Ascending aorta (tissue), 2 donors: ENCODE measurements at regions of chr1 and their contacts with region 1.

Region 1: DNA sequence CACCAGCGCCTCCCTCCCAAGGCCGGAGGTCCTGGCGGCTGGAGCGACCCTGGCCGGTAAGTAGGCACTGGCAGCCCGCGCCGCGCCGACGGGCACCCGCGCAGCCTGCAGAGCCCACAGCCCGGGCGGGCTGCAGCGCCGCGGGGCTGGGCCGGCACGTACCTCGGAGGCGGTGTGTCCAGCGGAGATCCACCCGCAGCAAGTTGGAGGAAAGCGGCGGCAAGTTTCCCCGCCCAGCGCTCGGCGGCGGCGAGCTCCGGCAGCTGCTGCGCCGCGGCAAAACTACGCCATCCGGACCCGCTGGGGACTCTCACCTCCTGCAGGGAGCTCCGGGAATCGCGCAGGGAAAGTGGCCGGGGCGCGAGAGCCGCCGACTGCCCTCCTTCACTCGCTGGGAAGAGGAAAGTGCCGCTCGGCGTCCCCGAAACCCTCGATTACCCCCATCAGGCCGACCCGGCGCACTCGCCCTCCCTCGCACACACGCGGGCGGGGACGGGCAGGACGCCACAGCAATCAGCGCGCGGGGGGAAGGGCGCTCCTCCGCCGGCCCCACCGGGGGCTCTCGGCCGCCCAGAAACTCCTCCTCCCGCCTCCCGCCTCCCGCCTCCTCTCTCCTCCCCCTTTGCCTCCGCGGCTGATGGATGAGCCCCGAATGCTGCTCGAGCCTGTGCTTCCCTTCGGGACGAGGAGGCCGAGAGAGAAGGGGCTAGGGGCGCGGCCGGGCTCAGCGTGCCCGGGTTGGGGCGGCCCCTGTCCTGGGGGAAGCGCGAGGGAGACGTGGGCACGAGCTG is at the start of gene TGFBR3:
- DNase-seq: peak; percentile 50 to 95
- H3K4me3 ChIP-seq: peak within 1 kb of the TSS; percentile 64 to 90
- H3K27ac ChIP-seq: peak within 1 kb of the TSS; percentile 83 to 95
- H3K4me1 ChIP-seq: peaks cover 0 to 10% of the 10 kb centered on the region in 2 donors
- H3K27me3 ChIP-seq: no peaks in the 10 kb centered on the region
- CTCF ChIP-seq: peak; percentile 52 to 60 (median 52)
- total RNA-seq, gene TGFBR3: 127 TPM

Region 2: GRCh38 chr1:91553200-91553621 is 332.7 kb before region 1 on chr1:
- intact Hi-C with region 1: loop called (anchors 5 kb)
- DNase-seq: peak in 1 of 2 donors; percentile 79
- H3K4me3 ChIP-seq: no peak overlapping the region
- H3K27ac ChIP-seq: peak overlapping the region; percentile 59 to 63
- H3K4me1 ChIP-seq: peaks cover 3 to 9% of the 10 kb centered on the region in 2 donors
- H3K27me3 ChIP-seq: no peaks in the 10 kb centered on the region
- CTCF ChIP-seq: no peak

Region 3: GRCh38 chr1:91650764-91651163 is 235.1 kb before region 1 on chr1:
- intact Hi-C with region 1: loop called (anchors 2 kb)
- DNase-seq: peak; percentile 67 to 89
- H3K4me3 ChIP-seq: no peak overlapping the region
- H3K27ac ChIP-seq: peak overlapping the region; percentile 50 to 81
- H3K4me1 ChIP-seq: peaks cover 0 to 11% of the 10 kb centered on the region in 2 donors
- H3K27me3 ChIP-seq: no peaks in the 10 kb centered on the region
- CTCF ChIP-seq: no peak

Region 4: DNA sequence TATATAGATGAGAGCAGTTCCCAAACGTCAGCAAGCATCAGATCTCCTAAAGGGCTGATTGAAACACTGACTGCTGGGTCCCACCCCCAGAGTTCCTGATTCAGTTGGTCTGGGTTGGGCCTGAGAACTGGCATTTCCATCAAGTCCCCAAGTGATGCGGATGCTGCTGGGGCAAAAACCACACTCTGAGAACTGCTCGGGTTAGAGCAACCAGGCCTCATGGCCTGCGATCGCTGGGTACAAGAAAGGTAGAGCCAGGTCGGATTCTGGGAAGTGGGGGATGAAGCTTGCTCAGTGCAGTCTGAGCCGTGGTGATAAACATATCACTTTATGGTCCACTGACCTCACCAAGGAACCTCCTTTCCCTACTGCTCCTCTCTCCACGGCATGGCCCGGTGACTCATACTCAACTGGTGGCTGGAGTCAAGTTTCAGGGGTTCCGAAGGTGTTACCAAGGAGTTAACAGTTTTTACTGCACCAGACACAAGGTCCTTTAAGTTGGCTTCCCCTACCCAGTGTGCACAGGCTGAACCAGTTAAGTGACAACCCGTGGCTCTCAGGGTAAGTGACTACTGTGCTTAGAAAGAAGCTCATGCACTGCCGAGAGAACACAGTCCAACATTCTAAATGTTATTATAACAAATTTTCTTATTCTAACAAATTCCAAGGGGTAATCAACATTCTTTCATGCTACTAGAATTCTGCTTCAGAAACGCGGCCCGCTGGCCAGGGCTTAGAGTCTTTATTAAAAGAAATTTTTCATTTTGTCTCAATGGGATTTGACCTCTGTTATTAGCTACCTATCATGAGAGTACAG is 153.4 kb before region 1 on chr1:
- intact Hi-C with region 1: loop called (anchors 5 kb)
- DNase-seq: no peak
- H3K4me3 ChIP-seq: no peak overlapping the region
- H3K27ac ChIP-seq: peak overlapping the region in 1 of 2 donors; percentile 17
- H3K4me1 ChIP-seq: peaks cover 0 to 28% of the 10 kb centered on the region in 2 donors
- H3K27me3 ChIP-seq: no peaks in the 10 kb centered on the region
- CTCF ChIP-seq: no peak

Region 5: DNA sequence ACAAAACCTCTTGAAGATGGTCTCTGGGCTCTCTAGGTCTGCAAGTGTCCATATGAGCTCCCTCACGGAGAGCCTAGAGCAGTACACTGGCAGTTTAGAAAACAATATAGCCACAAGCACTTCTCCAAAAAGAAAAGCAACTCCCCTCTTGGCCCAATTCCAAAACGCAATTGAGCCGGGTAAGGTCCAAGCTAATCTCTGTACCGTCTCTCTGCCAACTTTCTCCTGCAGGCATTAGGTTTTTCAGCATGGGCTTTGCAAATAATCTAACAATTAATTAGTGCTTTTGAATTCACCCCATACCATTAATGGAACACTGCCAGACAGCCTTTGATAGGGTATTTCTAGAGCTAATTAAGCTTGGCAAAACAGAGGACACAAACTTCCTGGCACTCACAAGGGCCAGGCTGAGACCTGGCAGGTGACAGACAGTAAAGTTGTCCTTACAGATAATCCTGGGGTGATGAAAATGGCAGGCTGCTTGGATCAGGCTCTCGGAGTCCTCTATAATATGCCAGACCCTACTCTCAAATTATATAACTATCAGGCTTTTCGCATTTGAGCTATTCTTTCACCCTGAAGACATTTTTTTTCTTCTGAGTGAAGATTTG is 39.8 kb before region 1 on chr1:
- intact Hi-C with region 1: loop called (anchors 1 kb)
- DNase-seq: no peak
- H3K4me3 ChIP-seq: no peak overlapping the region
- H3K27ac ChIP-seq: peak overlapping the region; percentile 76 to 81
- H3K4me1 ChIP-seq: peaks cover 9 to 27% of the 10 kb centered on the region in 2 donors
- H3K27me3 ChIP-seq: no peaks in the 10 kb centered on the region
- CTCF ChIP-seq: no peak

Region 6: GRCh38 chr1:91929250-91929649 is 43.3 kb after region 1 on chr1:
- intact Hi-C with region 1: loop called (anchors 5 kb)
- DNase-seq: no peak
- H3K4me3 ChIP-seq: no peak overlapping the region
- H3K27ac ChIP-seq: no peak overlapping the region
- H3K4me1 ChIP-seq: no peaks in the 10 kb centered on the region
- H3K27me3 ChIP-seq: no peaks in the 10 kb centered on the region
- CTCF ChIP-seq: no peak